Dendritic cell treated with granulocyte-macrophage colony-stimulating factor and Interleukin-4, amounts not matched to agents 40 ng/mL and 50 ng/mL, for 4 days (primary cell): ENCODE measurements at regions of chr14 and their contacts with region 1.

Region 1: GRCh38 chr14:76647697-76648298 is 113.5 kb upstream of the VASH1 start:
- H3K4me3 Mint-ChIP-seq: no peak overlapping the region
- H3K27ac Mint-ChIP-seq: no peak overlapping the region
- H3K4me1 Mint-ChIP-seq: no peaks in the 10 kb centered on the region
- H3K27me3 Mint-ChIP-seq: peaks cover 14% of the 10 kb centered on the region

Region 2: DNA sequence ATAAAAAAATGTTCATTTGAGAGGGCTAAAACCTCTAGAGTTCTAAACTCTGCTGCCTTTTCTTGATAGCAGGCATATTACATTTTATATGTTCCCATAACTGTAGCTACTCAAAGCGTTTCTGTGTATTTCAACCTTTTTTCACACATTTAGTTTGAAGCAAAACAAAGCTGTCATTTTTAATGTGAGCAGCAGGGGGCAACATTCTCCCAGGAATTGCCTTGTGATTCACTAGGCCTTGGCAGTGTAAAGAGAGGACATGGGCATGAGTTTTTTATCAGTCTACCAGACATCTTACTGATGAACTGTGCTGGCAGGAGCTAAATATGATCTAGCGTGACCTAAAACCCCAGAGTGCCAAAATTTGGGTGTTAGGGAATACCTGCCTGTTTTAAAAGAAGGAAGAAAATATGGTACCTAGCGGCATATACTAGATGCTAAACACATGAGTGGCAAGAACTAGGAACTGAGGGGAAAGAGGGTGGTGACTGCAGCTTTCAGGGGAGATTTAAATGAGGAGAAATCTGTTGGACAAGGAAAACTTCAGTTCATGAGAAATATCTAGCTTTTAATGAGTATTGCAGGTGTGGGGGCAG is 596.9 kb before region 1 on chr14:
- intact Hi-C with region 1: loop called (anchors 2 kb)
- H3K4me3 Mint-ChIP-seq: no peak overlapping the region
- H3K27ac Mint-ChIP-seq: no peak overlapping the region
- H3K4me1 Mint-ChIP-seq: peaks cover 16% of the 10 kb centered on the region
- H3K27me3 Mint-ChIP-seq: no peaks in the 10 kb centered on the region

Region 3: DNA sequence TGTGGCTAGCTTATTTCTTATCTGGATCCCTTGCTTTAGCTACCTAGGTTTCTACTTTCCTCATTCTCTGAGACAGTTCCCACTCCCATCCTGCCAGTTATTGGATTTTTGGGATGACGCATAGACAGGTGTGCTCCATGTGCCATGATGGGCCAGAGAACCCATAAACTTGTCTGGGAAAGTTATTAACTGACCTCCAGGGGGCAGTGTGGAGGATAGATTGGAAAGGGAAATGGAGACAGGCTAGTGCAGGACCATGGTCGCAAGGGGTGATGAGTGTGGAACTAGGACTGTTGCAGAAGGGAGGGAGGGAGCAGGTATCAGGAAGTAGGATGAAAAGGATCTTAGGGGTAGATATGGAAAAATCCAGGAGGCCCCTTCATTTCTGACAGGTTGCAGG is 191.6 kb before region 1 on chr14:
- intact Hi-C with region 1: loop called (anchors 5 kb)
- H3K4me3 Mint-ChIP-seq: no peak overlapping the region
- H3K27ac Mint-ChIP-seq: no peak overlapping the region
- H3K4me1 Mint-ChIP-seq: no peaks in the 10 kb centered on the region
- H3K27me3 Mint-ChIP-seq: peaks cover 4% of the 10 kb centered on the region

Region 4: DNA sequence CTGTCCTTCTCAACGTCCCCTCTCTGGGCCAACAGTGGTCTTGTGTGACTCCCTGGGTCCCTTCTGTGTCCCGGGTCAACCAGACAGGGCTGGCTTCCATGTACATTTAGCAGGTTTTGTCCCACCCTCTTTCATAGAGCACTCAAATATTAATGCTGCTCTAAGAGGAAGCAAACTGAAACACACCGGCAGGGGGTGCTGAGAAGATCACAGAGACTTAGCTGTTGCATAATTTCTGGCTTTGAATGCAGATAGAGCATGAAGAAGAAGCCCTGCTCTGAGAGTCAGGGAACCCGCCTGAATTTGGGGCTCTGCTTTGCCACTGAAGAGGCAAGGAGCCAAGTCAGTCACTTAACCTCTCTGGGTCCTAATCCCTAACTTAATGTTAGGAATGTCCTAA is 133.2 kb before region 1 on chr14:
- intact Hi-C with region 1: loop called (anchors 5 kb)
- H3K4me3 Mint-ChIP-seq: no peak overlapping the region
- H3K27ac Mint-ChIP-seq: no peak overlapping the region
- H3K4me1 Mint-ChIP-seq: no peaks in the 10 kb centered on the region
- H3K27me3 Mint-ChIP-seq: peaks cover 8% of the 10 kb centered on the region

Region 5: DNA sequence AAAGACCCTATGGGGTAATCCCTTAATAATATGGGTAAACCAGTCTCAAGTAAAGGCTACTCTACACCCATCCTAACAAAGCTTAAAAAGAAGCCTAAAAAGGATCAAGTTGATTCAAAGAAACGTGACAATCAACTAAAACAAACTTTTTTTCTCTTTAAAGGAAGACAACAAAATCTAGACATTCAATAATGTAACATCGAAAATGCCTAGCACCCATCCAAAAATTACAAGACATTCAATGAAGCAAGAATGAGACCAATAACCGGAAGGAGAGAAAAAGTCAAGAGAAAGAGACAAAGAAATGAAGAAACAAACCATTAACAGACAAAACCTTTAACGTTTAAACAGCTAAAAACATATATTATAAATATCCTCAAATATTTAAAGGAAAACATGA is 30.4 kb before region 1 on chr14:
- intact Hi-C with region 1: no loop called
- H3K4me3 Mint-ChIP-seq: no peak overlapping the region
- H3K27ac Mint-ChIP-seq: no peak overlapping the region
- H3K4me1 Mint-ChIP-seq: no peaks in the 10 kb centered on the region
- H3K27me3 Mint-ChIP-seq: peaks cover 9% of the 10 kb centered on the region